ENCODE measurements at regions of chr2 and their contacts with region 1.

Region 1: GRCh38 chr2:6008726-6009125 is 316.5 kb downstream of the SOX11 start:
- DNase-seq: no peak
- H3K4me3 ChIP-seq: no peak overlapping the region
- H3K27ac ChIP-seq: no peak overlapping the region
- H3K4me1 ChIP-seq: no peaks in the 10 kb centered on the region
- H3K27me3 ChIP-seq: no peaks in the 10 kb centered on the region
- CTCF ChIP-seq: no peak

Region 2: GRCh38 chr2:6060992-6061663 is 52.4 kb after region 1 on chr2:
- CTCF ChIA-PET with region 1: no interaction called
- dilution Hi-C with region 1: loop called (anchors 5 kb)
- in situ Hi-C with region 1: no loop called
- intact Hi-C with region 1: no loop called
- DNase-seq: no peak
- H3K4me3 ChIP-seq: no peak overlapping the region
- H3K27ac ChIP-seq: no peak overlapping the region
- H3K4me1 ChIP-seq: no peaks in the 10 kb centered on the region
- H3K27me3 ChIP-seq: no peaks in the 10 kb centered on the region
- CTCF ChIP-seq: no peak

Region 3: GRCh38 chr2:6423157-6423556 is 414.4 kb after region 1 on chr2:
- CTCF ChIA-PET with region 1: no interaction called
- dilution Hi-C with region 1: no loop called
- in situ Hi-C with region 1: no loop called
- intact Hi-C with region 1: no loop called
- DNase-seq: no peak
- H3K4me3 ChIP-seq: no peak overlapping the region
- H3K27ac ChIP-seq: no peak overlapping the region
- H3K4me1 ChIP-seq: no peaks in the 10 kb centered on the region
- H3K27me3 ChIP-seq: no peaks in the 10 kb centered on the region
- CTCF ChIP-seq: no peak

Measured in mammary epithelial cell (primary cell).